Activated CD4-positive, alpha-beta T cell treated with anti-CD3 and anti-CD28 coated beads, Interleukin-2, amount 10 ng/mL, durations not matched to agents 7 days and 5 days (primary cell): ENCODE measurements at regions of chr2 and their contacts with region 1.

Region 1: GRCh38 chr2:176161819-176162626 is 4.9 kb downstream of the HOXD3 start:
- DNase-seq: no peak
- H3K4me3 Mint-ChIP-seq: no peak overlapping the region
- H3K27ac Mint-ChIP-seq: no peak overlapping the region
- H3K4me1 Mint-ChIP-seq: peaks cover 9% of the 10 kb centered on the region
- H3K27me3 Mint-ChIP-seq: peaks cover 89% of the 10 kb centered on the region

Region 2: DNA sequence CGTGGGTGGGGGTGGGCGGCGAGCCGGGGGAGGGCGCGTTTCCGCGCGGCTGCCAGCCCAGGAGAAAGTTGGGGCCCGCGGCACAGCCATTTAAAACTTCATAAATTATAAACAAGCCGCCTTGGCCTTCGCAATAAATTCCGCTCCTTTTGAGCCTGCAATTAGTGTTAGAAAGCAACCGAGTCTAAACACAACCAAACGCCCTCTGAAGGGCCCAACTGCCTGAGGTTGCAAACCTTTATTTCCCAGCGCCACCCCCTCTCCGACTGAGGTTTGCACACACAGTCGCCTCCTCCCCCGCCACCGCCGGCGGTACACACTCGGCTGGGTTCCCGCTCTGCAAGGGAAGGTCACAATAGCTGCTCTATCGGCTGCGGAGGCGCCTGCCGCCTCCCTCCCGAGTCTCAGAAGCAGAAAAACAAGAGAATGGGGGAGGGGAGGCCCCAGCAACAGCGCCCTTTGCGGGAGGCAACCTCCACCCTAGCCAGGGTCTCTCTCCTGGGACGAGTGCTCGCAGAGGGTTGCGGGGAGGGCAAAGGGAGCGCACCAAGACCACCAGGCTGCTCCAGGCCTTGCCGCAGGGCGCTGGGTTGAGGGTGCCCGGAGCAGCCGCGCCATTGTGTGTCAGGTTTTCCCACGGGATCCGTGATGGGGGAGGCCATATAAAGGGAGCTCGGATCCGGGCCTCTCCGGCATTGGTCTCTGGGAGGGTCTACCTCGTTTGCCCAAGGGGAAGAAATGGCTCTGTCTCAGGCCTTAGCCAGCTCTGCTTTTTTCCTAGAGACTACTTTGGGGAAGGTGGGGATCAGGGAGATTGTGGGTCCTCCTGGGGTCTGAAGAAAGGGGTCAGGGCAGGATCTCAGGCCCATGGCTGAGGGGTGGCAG is 13.0 kb after region 1 on chr2:
- CTCF ChIA-PET with region 1: interaction called, 19 read pairs
- POLR2A ChIA-PET with region 1: no interaction called
- DNase-seq: no peak
- H3K4me3 Mint-ChIP-seq: no peak overlapping the region
- H3K27ac Mint-ChIP-seq: no peak overlapping the region
- H3K4me1 Mint-ChIP-seq: peaks cover 4% of the 10 kb centered on the region
- H3K27me3 Mint-ChIP-seq: peaks cover 88% of the 10 kb centered on the region

Region 3: GRCh38 chr2:176187899-176188773 is 26.1 kb after region 1 on chr2 and contains the start of gene HOXD1:
- CTCF ChIA-PET with region 1: no interaction called
- POLR2A ChIA-PET with region 1: no interaction called
- DNase-seq: no peak
- H3K4me3 Mint-ChIP-seq: peak within 1 kb of the TSS; percentile 73
- H3K27ac Mint-ChIP-seq: no peak within 1 kb of the TSS
- H3K4me1 Mint-ChIP-seq: peaks cover 17% of the 10 kb centered on the region
- H3K27me3 Mint-ChIP-seq: peaks cover 77% of the 10 kb centered on the region
- total RNA-seq, gene HOXD1: not detected

Region 4: GRCh38 chr2:176317199-176317598 is 155.2 kb after region 1 on chr2:
- CTCF ChIA-PET with region 1: no interaction called
- POLR2A ChIA-PET with region 1: no interaction called
- DNase-seq: no peak
- H3K4me3 Mint-ChIP-seq: no peak overlapping the region
- H3K27ac Mint-ChIP-seq: no peak overlapping the region
- H3K4me1 Mint-ChIP-seq: peaks cover 7% of the 10 kb centered on the region
- H3K27me3 Mint-ChIP-seq: no peaks in the 10 kb centered on the region

Region 5: DNA sequence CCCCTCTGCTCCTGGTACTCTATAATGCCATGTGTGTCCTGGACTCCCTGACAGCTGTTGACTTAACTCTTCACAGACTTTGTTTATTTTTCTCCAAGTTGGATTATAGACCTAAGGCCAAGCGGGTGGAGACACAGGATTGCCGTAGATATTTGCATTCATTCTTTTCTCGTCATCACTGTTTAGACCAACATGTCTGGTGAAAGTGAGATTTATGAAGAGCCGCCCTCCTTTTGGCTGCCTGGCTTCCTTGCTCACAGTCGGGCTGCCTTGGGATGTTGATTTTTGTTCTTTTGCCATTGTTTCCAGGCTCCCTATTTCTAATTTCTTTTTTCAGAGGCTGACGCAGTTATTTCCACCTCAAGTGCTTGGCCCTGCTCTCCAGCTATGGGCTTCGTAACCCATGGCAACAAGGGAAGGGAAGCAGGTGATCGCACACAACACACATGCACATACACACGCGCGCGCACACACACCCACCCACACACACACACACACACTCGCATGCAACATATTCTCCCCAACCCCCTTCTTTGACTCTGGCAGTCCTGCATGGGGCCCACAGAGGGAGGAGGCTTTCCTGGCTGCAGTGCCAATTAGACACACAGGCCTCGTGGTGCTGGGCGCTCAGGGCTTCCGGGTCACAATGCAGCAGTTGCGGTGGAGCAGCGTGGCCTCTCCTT is 403.8 kb after region 1 on chr2:
- CTCF ChIA-PET with region 1: no interaction called
- POLR2A ChIA-PET with region 1: no interaction called
- DNase-seq: no peak
- H3K4me3 Mint-ChIP-seq: no peak overlapping the region
- H3K27ac Mint-ChIP-seq: no peak overlapping the region
- H3K4me1 Mint-ChIP-seq: no peaks in the 10 kb centered on the region
- H3K27me3 Mint-ChIP-seq: peaks cover 49% of the 10 kb centered on the region